Panc1 (cell line): ENCODE measurements at regions of chr12 and their contacts with region 1.

Region 1: DNA sequence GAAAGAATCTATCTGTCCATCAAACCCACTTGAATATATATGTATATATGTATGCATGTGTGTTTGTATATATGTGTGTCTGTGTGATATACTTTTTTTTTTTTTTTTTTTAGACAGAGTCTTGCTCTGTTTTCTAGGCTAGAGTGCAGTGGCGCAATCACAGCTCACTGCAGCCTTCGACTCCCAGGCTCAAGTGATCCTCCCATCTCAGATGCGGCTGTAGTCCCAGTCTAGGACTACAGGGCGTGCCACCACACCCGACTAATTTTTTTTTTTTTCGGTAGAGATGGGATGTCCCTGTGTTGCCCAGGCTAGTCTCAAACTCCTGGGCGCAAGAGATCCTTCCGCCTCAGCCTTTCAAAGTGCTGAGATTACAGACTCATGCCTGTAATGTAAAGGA is 13.0 kb upstream of the APOBEC1 start:
- DNase-seq: no peak
- ATAC-seq: no peak
- H3K4me3 ChIP-seq: no peak overlapping the region
- H3K27ac ChIP-seq: no peak overlapping the region
- H3K4me1 ChIP-seq: no peaks in the 10 kb centered on the region
- H3K27me3 ChIP-seq: no peaks in the 10 kb centered on the region
- CTCF ChIP-seq: no peak

Region 2: DNA sequence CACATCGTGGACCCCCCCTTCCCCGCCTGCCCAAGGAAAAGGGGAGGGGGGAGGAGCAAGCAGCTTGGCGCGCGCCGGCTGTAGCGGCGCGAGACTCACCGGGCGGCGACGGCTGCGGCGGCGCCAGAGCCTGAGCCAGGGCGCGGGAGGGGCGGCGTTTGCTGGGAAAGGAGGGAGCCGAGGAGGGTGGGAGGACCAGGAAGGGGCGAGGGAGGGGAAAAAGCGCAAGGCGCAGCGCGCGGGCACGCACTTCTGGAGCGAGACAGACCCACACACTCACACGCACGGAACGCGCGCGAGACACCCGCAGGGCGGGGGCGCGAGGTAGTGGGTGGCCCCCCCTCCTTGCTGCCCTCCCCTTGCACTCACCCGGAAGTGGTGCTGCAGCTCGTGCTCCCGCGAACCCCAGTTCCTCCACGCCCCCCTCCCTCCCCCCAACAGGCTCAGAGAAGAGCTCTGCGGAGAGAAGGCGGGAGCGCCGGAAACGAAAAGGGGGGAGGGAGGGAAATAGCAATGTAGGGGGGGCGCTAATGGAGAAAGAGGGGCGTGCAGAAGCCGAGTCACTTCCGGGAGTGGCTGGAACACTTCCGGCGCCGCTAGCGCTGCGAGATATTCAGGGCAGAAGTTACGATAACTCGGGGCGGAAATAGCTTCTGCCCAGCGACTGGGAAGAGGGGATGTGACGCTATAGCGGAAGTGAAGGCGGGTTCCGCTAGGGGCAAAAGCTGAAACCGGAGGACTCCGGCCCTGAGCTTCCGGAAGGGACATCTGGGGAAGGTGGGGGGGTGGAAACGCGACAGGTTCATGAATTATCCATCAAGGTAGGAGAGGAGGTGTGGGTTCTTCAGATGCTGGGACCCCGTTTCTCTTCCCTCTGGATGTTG is 989.5 kb before region 1 on chr12 and contains the start of gene ZNF384:
- CTCF ChIA-PET with region 1: no interaction called
- POLR2A ChIA-PET with region 1: no interaction called
- in situ Hi-C with region 1: no loop called
- intact Hi-C with region 1: no loop called
- DNase-seq: peak; percentile 86
- ATAC-seq: peak; percentile 94
- H3K4me3 ChIP-seq: peak within 1 kb of the TSS; percentile 83 to 86
- H3K27ac ChIP-seq: peak within 1 kb of the TSS; percentile 97
- H3K4me1 ChIP-seq: peaks cover 14% of the 10 kb centered on the region
- H3K27me3 ChIP-seq: no peaks in the 10 kb centered on the region
- CTCF ChIP-seq: no peak
- total RNA-seq, gene ZNF384: 54.3 TPM

Region 3: GRCh38 chr12:7748852-7749251 is 70.1 kb after region 1 on chr12:
- CTCF ChIA-PET with region 1: no interaction called
- POLR2A ChIA-PET with region 1: no interaction called
- in situ Hi-C with region 1: no loop called
- intact Hi-C with region 1: loop called (anchors 5 kb)
- DNase-seq: no peak
- ATAC-seq: no peak
- H3K4me3 ChIP-seq: no peak overlapping the region
- H3K27ac ChIP-seq: no peak overlapping the region
- H3K4me1 ChIP-seq: no peaks in the 10 kb centered on the region
- H3K27me3 ChIP-seq: no peaks in the 10 kb centered on the region
- CTCF ChIP-seq: no peak